RWPE1 (cell line): ENCODE measurements at regions of chr1 and their contacts with region 1.

Region 1: DNA sequence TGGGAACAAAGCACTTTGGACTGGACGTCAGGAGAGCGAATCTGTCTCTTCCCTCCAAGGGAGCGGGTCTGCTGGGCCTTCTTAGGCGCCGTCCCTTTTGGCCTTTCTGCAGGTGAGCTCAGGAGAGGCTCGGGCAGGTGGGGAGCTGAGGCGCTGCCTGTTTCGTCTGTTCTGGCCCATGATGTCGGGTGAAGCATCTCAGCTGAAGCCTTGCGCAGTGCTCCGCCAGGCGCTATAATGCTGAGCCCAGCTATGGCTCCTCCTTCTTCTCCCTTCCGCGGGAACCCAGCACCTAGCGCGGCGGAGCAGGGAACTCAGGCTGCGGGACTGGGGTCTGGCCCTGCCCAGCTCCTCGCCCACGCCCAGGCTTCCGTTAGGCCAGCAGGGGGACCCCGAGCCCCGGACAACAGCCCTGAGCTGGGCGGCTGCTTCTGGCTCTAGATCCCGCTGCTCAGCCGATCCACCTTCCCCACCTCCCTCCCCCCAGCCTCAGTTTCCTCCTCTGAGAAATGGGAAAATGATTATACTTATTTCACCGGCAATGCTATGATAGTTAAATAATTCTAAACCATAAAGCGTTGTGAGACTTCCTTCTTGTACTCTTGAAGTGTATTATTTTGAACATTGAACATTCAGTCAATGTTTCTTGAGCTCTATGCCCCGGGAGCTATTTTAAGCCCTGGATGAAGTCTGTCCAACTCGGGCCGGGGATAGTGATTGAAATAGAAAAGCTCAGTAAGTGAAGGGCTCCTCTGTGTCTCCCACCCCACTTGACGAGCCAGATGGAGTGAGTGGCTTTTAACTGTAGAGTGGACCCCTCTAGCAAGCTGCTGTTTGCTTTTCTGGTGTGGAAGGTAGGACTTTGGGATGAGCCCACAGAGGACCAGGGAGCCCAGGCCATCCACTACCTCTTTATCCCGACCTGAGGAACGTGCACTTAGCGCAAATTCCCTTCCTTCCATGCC is 9.6 kb upstream of the ADORA1 start:
- DNase-seq: peak; percentile 83
- H3K27ac ChIP-seq: no peak overlapping the region
- CTCF ChIP-seq: peak; percentile 60

Region 2: GRCh38 chr1:202791077-202791747 is 326.7 kb before region 1 on chr1:
- CTCF ChIA-PET with region 1: no interaction called
- POLR2A ChIA-PET with region 1: no interaction called
- DNase-seq: no peak
- H3K27ac ChIP-seq: no peak overlapping the region
- CTCF ChIP-seq: no peak

Region 3: GRCh38 chr1:203206129-203206687 is 88.3 kb after region 1 on chr1:
- CTCF ChIA-PET with region 1: interaction called, 10 read pairs
- POLR2A ChIA-PET with region 1: no interaction called
- DNase-seq: no peak
- H3K27ac ChIP-seq: no peak overlapping the region
- CTCF ChIP-seq: no peak